GM12878 (cell line): ENCODE measurements at regions of chr19 and their contacts with region 1.

Region 1: GRCh38 chr19:27966390-27966816 is 1246.5 kb downstream of the UQCRFS1 start:
- DNase-seq: no peak
- ATAC-seq: no peak
- H3K4me3 ChIP-seq: no peak overlapping the region
- H3K27ac ChIP-seq: no peak overlapping the region
- H3K4me1 ChIP-seq: no peaks in the 10 kb centered on the region
- H3K27me3 ChIP-seq: no peaks in the 10 kb centered on the region
- CTCF ChIP-seq: peak; percentile 47 to 64 (median 54); a peak in 5 of 6 replicates
- EP300 ChIP-seq: no peak
- POLR2A ChIP-seq: no peak
- RAD21 ChIP-seq: peak; percentile 57

Region 2: DNA sequence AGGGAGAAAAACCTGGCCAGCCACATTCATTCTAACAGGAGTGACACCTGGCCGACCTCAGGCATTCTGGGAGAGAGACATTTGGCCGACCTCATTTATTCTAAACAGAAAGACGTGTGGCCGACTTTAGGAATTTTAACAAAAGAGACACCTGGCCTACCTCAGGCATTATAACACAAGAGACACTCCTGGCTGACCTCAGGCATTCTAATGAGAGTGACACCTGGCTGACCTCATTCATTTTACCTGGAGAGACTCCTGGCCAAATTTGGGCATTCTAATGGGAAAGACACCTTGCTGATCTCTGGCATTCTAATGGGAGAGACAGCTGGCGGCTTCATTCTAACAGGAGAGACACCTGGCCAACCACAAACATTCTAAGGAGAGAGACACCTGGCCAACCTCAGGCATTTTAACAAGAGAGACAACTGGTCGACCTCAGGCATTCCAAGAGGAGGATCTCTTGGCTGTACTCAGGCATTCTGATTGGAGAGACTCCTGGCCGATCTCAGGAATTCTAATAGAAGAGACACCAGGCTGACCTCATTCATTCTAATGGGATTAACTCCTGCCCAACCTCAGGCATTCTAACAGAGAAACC is 107.3 kb before region 1 on chr19:
- CTCF ChIA-PET with region 1: no interaction called
- POLR2A ChIA-PET with region 1: no interaction called
- RAD21 ChIA-PET with region 1: no interaction called
- SMC1A ChIA-PET with region 1: no interaction called
- in situ Hi-C with region 1: no loop called
- intact Hi-C with region 1: no loop called
- DNase-seq: no peak
- ATAC-seq: no peak
- H3K4me3 ChIP-seq: no peak overlapping the region
- H3K27ac ChIP-seq: no peak overlapping the region
- H3K4me1 ChIP-seq: no peaks in the 10 kb centered on the region
- H3K27me3 ChIP-seq: no peaks in the 10 kb centered on the region
- CTCF ChIP-seq: no peak
- EP300 ChIP-seq: no peak
- POLR2A ChIP-seq: no peak
- RAD21 ChIP-seq: no peak

Region 3: DNA sequence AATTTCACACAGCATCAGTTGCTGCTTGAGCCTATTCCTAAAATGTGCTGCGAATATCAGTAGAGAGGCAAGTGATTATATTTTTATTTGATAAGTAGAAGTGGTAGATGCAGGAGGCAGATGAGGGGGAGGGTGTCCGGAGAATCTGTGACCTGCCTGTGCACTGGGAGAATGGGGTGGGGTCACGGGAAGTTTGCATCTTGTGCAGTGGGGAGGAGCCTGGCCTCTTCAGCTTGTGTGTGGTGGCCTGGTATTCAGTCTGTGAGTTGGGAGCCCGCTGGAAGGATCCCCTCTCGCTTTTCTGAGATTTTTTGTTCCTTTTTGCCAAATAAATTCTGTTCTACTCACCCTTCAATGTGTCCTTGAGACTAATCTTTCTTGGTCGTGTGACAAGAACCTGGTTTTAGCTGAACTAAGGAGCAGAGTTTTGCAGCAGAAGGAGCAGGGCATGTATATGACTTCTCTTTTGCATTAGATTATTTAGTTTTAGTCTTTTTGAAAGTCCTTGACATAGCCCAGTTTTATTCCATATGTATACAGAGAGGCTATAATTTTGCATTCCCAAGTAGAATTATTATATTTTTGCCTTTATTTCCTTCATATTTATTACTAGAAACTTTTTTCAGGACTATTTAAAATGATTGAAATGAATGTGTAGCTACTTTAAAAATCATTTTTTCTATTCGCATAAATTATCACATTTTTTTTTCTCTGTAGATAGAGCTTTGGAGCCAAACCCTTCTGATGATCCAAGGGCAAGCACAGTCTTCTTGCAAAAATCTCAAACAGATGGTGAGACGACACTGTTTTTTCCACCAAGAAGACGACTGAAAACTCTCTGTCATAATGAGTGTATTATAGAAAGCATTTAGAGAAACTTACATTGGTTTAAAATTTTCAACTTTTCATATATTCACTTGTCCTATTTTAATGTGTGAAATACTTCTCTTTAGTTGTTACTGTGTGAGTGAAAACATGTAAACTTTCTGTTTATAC is 10.6 kb before region 1 on chr19:
- CTCF ChIA-PET with region 1: interaction called, 10 read pairs
- POLR2A ChIA-PET with region 1: no interaction called
- RAD21 ChIA-PET with region 1: no interaction called
- SMC1A ChIA-PET with region 1: no interaction called
- in situ Hi-C with region 1: no loop called
- intact Hi-C with region 1: no loop called
- DNase-seq: no peak
- ATAC-seq: no peak
- H3K4me3 ChIP-seq: no peak overlapping the region
- H3K27ac ChIP-seq: no peak overlapping the region
- H3K4me1 ChIP-seq: no peaks in the 10 kb centered on the region
- H3K27me3 ChIP-seq: no peaks in the 10 kb centered on the region; a peak in 1 of 4 replicates
- CTCF ChIP-seq: no peak
- EP300 ChIP-seq: no peak
- POLR2A ChIP-seq: no peak
- RAD21 ChIP-seq: no peak

Region 4: GRCh38 chr19:28213470-28214082 is 247.2 kb after region 1 on chr19:
- CTCF ChIA-PET with region 1: interaction called, 13 read pairs
- POLR2A ChIA-PET with region 1: no interaction called
- RAD21 ChIA-PET with region 1: interaction called, 5 read pairs
- SMC1A ChIA-PET with region 1: interaction called, 12 read pairs
- in situ Hi-C with region 1: no loop called
- intact Hi-C with region 1: no loop called
- DNase-seq: no peak
- ATAC-seq: no peak
- H3K4me3 ChIP-seq: no peak overlapping the region
- H3K27ac ChIP-seq: no peak overlapping the region
- H3K4me1 ChIP-seq: no peaks in the 10 kb centered on the region
- H3K27me3 ChIP-seq: no peaks in the 10 kb centered on the region
- CTCF ChIP-seq: no peak
- EP300 ChIP-seq: no peak
- POLR2A ChIP-seq: no peak
- RAD21 ChIP-seq: no peak

Region 5: DNA sequence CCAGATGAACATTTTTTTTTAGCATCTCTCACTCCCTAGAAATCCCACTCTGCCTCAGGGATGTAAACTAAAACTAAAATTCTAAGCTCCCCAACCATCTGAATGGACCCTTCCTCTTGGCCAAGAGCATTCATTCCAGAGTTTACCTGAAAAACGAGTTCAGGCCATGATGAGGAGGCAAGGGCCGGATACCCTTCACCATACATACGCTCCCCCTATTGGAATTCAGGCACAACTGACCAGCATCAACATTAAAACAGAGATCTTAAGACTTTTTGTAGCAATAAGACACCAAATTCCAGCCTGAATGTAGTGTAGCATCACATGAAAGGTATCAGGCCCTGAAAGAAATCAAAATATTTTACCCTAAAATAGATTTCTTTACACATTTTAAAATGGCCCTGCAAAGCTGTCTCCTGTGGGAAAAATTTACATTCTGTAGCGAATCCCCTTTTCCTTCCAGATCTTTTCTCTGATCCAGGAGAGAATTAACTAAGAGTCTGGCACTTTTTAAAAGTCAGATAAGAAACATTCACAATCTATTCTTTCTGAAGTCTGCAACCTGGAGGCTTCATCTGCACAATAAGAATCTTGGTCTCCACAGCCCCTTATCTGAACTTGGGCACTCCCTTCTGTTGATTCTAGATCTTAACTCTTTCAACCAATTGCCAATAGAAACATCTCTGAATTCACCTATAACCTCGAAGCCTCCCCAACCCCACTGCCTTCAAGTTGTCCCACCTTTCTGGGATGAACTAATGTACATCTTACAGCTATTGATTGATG is 358.1 kb after region 1 on chr19:
- CTCF ChIA-PET with region 1: interaction called, 91 read pairs
- POLR2A ChIA-PET with region 1: no interaction called
- RAD21 ChIA-PET with region 1: interaction called, 48 read pairs
- SMC1A ChIA-PET with region 1: interaction called, 88 read pairs
- in situ Hi-C with region 1: no loop called
- intact Hi-C with region 1: no loop called
- DNase-seq: no peak
- ATAC-seq: no peak
- H3K4me3 ChIP-seq: no peak overlapping the region
- H3K27ac ChIP-seq: no peak overlapping the region
- H3K4me1 ChIP-seq: no peaks in the 10 kb centered on the region
- H3K27me3 ChIP-seq: no peaks in the 10 kb centered on the region
- CTCF ChIP-seq: no peak
- EP300 ChIP-seq: no peak
- POLR2A ChIP-seq: no peak
- RAD21 ChIP-seq: no peak

Region 6: DNA sequence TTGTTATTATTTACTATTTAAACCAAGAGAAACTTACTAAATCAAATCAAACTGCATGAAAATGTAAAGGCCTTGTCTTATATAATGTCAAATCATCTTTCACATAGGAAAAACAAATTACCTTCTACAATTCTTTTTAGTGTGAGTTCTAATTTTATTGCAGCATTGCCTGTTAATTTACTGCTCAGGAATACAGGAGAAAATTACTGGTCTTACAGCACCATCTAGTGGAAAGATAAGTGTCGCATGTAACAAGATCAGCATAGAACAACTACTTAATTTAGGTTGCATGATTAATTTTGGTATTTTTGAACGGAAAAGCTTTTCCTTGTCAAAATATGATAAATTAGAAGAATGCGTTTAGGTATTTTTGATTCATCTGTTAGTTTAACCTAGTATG is 743.9 kb after region 1 on chr19:
- CTCF ChIA-PET with region 1: interaction called, 3 read pairs
- POLR2A ChIA-PET with region 1: no interaction called
- RAD21 ChIA-PET with region 1: no interaction called
- SMC1A ChIA-PET with region 1: interaction called, 3 read pairs
- in situ Hi-C with region 1: loop called (anchors 25 kb)
- intact Hi-C with region 1: loop called (anchors 10 kb)
- DNase-seq: peak; percentile 3
- ATAC-seq: 0 out of 3 replicates have a peak, but pooled peaks have one; percentile 42
- H3K4me3 ChIP-seq: no peak overlapping the region
- H3K27ac ChIP-seq: no peak overlapping the region
- H3K4me1 ChIP-seq: no peaks in the 10 kb centered on the region
- H3K27me3 ChIP-seq: no peaks in the 10 kb centered on the region
- CTCF ChIP-seq: peak; percentile 46 to 56 (median 50); a peak in 5 of 6 replicates
- EP300 ChIP-seq: no peak
- POLR2A ChIP-seq: no peak
- RAD21 ChIP-seq: peak; percentile 66